Brain microvascular endothelial cell (primary cell): ENCODE measurements at regions of chr2 and their contacts with region 1.

Region 1: GRCh38 chr2:27123302-27124231 is at the start of gene ABHD1:
- DNase-seq: no peak
- H3K4me3 ChIP-seq: peak within 1 kb of the TSS; percentile 62
- H3K27ac ChIP-seq: no peak within 1 kb of the TSS
- H3K27me3 ChIP-seq: peaks cover 10% of the 10 kb centered on the region
- CTCF ChIP-seq: no peak

Region 2: GRCh38 chr2:27291865-27292264 is 168.3 kb after region 1 on chr2:
- in situ Hi-C with region 1: loop called (anchors 25 kb)
- DNase-seq: no peak
- H3K4me3 ChIP-seq: no peak overlapping the region
- H3K27ac ChIP-seq: no peak overlapping the region
- H3K27me3 ChIP-seq: peaks cover 15% of the 10 kb centered on the region
- CTCF ChIP-seq: no peak